Sciatic nerve (tissue), 2 donors: ENCODE measurements at regions of chr13 and their contacts with region 1.

Region 1: DNA sequence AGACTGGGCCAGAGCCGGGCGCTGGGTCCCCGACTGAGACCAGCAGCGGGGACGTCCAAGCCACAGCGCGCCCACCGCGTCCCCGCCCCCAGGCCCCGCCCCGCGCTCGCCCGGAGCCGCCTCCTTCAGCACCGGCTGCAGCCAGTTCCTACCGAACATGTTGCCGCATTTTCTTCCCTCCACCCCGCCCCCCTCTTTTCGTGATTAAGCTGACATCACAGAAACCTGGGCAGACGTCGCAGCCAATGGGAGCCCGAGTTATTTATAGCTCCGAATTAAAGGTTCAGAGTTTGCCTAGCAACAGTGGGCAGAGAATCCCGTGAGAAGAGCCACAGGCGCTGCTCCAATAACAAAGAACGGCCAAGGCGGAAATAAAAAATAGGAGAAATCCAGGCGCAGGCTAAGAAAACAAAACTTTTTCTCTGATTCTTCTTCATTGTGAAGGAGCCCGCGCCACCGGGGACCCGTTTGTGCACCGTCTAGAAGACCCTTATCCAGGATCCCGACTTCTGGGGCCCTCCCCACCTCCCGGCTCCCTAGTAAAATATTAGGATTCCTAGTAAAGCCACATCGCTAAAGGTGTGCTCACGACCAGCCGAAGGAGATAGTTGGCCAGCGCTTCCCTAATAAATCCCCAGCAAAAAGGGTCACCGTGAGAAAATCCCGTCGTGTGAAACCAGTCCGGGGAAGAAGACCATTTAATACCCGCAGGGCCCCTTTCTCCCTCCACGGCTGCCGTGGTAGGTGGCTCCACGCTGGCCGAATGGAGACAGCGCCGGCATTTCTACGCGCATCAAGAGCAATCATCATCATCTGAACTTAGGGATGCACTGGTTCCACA is 61.7 kb downstream of the SERP2 start:
- DNase-seq: peak; percentile 97
- ATAC-seq: peak; percentile 88

Region 2: DNA sequence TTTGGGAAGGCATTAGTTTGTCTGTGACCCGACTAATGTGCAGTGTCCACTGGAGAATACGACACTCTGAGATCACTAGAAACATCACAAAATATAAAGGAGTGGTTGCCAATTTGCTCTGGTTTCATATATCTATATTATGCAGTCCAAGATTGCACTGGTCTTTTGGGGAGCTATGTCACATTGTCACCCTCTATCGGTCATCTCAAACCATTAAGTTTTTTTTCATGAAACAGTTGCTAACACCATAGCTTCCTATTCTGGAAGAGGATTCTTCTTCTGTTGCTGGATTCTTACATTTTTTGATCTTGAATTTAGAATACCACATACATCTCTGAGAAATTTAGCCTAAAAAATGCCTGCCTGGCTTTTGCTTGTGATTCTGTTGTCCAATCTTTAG is 387.0 kb before region 1 on chr13:
- intact Hi-C with region 1: loop called (anchors 10 kb)
- DNase-seq: no peak
- ATAC-seq: no peak